Left ventricle myocardium superior (tissue), 1 donor: ENCODE measurements at regions of chr20 and their contacts with region 1.

Region 1: GRCh38 chr20:9344083-9344920 is 170.1 kb upstream of the LAMP5 start:
- DNase-seq: no peak
- ATAC-seq: peak; percentile 78

Region 2: GRCh38 chr20:8664778-8665177 is 679.5 kb before region 1 on chr20:
- intact Hi-C with region 1: no loop called
- DNase-seq: no peak
- ATAC-seq: peak; percentile 63

Region 3: DNA sequence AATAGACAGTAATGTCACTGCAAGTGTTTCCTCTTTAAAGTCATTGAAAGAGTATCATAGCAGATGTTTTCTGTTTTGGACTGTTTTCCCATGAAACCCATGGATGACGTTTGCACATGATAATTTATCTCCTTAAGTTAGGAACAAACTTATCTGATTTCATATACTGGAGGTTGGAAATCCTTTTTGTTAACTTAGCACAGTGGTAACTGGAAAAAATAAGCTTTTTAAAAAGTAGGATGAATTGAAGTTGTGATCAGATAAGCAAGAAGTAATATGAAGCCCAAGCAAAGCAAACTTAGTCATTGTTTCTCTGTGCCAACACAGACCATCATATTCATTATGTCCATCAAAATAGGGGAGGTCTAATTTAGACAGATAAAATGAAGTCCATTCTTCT is 213.8 kb before region 1 on chr20:
- intact Hi-C with region 1: no loop called
- DNase-seq: no peak
- ATAC-seq: peak; percentile 62

Region 4: GRCh38 chr20:9220874-9221547 is 123.3 kb before region 1 on chr20:
- intact Hi-C with region 1: loop called (anchors 10 kb)
- DNase-seq: no peak
- ATAC-seq: no peak

Region 5: DNA sequence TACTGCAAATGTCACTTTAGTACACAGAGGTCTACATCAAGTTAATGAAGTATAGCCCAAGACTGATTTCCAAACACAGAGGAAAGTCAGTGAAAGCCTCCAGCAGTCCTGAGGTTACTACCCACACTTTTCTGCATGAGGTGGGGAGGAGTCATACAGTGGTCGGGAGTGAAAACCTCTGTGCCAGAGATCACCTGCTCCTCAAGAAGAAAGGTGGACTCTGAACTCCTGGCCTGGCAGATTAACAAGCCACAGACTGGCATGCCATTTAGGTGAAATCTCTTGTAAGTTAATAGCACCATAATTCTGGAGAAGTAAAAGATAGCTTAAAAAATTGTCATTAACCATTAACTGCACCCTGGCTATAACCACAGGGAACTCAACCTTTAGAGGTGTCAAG is 45.0 kb after region 1 on chr20:
- intact Hi-C with region 1: no loop called
- DNase-seq: no peak
- ATAC-seq: no peak